Tibial artery (tissue), 4 donors: ENCODE measurements at regions of chr2 and their contacts with region 1.

Region 1: GRCh38 chr2:237474931-237475703 is 11.9 kb upstream of the MLPH start:
- DNase-seq: peak; percentile 73 to 86
- H3K4me3 ChIP-seq: peak overlapping the region; percentile 73 to 75
- H3K27ac ChIP-seq: peak overlapping the region; percentile 92 to 95
- H3K4me1 ChIP-seq: peaks cover 0 to 42% (median 20%) of the 10 kb centered on the region in 4 donors
- H3K27me3 ChIP-seq: no peaks in the 10 kb centered on the region
- CTCF ChIP-seq: peak; percentile 95 to 97

Region 2: DNA sequence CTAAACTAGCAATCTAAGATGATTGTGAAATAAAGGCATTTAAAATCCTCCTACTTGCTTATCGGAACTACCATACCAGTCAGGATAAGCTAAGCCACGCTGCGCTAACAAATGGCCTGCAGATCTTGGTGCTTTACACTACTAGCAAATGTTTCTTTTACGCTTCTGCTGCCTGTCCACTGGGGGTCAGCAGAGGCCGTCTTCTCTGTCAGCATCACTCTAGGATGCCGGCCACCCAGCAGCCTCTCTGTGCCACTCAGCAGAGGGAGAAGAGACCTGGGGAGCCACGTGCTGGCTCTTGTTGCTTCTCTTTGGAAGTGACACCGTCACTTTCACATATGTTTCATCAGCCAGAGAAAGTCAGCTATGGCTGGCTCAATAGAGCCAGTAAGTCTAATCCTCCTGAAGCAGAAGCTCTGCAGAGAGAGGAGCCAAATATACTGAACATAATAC is 352.9 kb before region 1 on chr2:
- intact Hi-C with region 1: loop called (anchors 10 kb)
- DNase-seq: peak; percentile 80 to 81
- H3K4me3 ChIP-seq: no peak overlapping the region
- H3K27ac ChIP-seq: no peak overlapping the region
- H3K4me1 ChIP-seq: no peaks in the 10 kb centered on the region
- H3K27me3 ChIP-seq: no peaks in the 10 kb centered on the region
- CTCF ChIP-seq: peak; percentile 75 to 81

Region 3: GRCh38 chr2:237154082-237154638 is 321.0 kb before region 1 on chr2:
- intact Hi-C with region 1: loop called (anchors 5 kb)
- DNase-seq: peak in 1 of 2 donors; percentile 68
- H3K4me3 ChIP-seq: no peak overlapping the region
- H3K27ac ChIP-seq: peak overlapping the region in 1 of 2 donors; percentile 87
- H3K4me1 ChIP-seq: peaks cover 0 to 23% (median 15%) of the 10 kb centered on the region in 4 donors
- H3K27me3 ChIP-seq: no peaks in the 10 kb centered on the region
- CTCF ChIP-seq: peak; percentile 59 to 61

Region 4: DNA sequence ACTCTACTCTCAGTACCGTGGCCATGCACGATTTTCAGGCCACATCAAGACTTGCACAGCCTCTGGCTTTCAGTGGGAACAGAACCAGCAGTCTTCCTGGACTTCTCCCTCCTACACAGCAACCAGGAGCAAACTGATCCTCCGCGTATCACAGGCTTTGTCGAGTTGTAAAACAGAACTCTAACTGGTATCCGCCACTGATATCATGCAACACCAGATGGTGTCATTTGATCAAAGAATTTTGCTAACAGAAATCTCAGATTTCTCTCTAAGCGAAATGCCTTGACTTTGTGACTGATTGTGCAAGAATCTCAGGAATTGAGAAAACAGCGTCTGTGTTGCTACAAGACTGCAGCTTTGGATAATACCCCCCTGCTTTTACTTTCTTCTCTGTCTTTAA is 303.7 kb before region 1 on chr2:
- intact Hi-C with region 1: loop called (anchors 5 kb)
- DNase-seq: peak; percentile 57 to 73
- H3K4me3 ChIP-seq: peak overlapping the region; percentile 4 to 27
- H3K27ac ChIP-seq: peak overlapping the region; percentile 62 to 68
- H3K4me1 ChIP-seq: peaks cover 0 to 13% (median 6%) of the 10 kb centered on the region in 4 donors
- H3K27me3 ChIP-seq: no peaks in the 10 kb centered on the region
- CTCF ChIP-seq: peak; percentile 29 to 48

Region 5: DNA sequence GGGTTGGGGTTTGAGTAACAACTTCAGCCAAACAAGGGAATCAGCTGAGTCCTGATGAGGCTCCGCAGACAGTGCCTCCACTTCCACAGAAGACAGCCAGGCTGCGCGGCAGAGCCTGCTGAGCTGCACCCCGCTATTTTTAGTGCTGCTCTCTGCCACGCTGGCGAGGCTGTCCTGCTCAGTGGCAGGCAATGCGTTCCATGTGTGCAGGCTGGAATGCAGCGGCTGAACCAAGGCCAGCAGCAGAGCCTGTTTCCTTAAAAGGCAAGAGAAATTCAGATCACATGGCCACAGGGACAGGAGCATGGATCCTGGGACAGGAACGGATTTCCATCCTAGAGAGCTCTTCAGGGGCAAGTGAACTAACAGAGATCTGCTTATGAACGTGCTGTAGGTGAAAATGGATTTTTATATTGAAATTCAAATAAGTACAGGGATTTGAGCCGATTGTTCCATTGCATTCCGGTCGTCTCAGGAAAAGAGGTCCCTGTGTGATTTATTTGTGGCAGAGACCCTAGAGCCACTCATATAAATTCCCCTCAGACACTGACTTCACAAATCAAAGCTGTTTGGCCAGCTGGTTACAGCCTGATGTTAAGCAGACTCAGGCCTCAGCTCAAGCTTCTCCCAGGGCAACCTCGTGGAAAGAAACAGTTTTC is 159.8 kb before region 1 on chr2:
- intact Hi-C with region 1: loop called (anchors 10 kb)
- DNase-seq: peak; percentile 90 to 97
- H3K4me3 ChIP-seq: no peak overlapping the region
- H3K27ac ChIP-seq: peak overlapping the region; percentile 94 to 98
- H3K4me1 ChIP-seq: peaks cover 4 to 70% (median 41%) of the 10 kb centered on the region in 4 donors
- H3K27me3 ChIP-seq: no peaks in the 10 kb centered on the region
- CTCF ChIP-seq: peak; percentile 63 to 65

Region 6: DNA sequence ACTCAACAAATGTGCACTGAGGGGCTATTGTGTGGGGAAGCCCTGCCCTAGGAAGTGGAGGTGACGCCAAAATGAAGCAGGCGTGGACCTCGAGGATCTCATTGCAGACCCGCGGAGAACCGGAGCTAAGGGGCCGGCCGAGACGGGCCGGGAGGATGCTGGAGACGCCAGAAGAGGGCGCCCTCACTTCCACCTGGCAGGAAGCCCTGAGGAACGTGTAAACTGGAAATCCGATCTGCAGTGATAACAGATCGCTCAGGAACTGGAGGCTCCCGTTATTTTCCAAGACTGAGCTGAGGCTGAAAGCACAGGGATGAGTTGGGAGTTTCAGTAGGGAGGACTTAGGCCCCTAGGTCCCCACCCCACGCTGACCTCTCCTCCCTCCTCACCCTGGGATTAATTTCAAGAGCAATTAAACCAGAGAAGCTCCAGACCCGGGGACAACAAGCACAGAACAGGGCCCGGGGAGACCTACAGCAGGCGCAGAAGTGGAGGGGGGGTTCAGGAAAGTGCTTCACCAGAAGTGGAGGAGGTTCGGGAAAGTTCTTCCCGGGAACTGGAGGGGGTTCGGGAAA is 53.5 kb before region 1 on chr2:
- intact Hi-C with region 1: loop called (anchors 5 kb)
- DNase-seq: peak; percentile 79 to 89
- H3K4me3 ChIP-seq: peak overlapping the region; percentile 15 to 33
- H3K27ac ChIP-seq: peak overlapping the region; percentile 47 to 58
- H3K4me1 ChIP-seq: peaks cover 0 to 12% (median 7%) of the 10 kb centered on the region in 4 donors
- H3K27me3 ChIP-seq: no peaks in the 10 kb centered on the region
- CTCF ChIP-seq: peak; percentile 83 to 90